Sigmoid colon (tissue), 7 donors: ENCODE measurements at regions of chr20 and their contacts with region 1.

Region 1: DNA sequence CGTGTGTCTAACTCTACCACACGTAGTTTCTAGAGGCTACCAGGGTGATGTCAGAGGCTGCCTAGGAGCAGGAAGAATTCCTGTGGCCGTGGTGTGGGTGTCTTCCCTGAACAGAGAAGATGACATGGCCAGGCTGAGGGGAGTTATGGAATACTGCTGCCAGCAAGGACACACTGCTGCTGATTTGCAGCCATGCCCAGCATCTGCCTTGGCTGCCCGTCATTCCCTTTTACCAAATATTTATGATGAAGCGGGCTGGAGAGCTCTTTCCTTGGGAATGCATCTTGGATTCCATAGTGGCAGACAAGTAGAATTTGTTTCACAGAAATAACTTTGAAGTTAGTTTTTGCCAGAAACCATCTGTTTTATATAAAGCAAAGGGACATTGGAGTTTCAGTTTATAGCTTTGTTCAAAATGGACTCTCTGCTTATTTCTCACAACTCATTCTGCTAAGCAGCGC is 80.8 kb upstream of the VSTM2L start:
- DNase-seq: peak; percentile 72
- H3K4me3 ChIP-seq: peak overlapping the region in 1 of 4 donors; percentile 7
- H3K27ac ChIP-seq: peak overlapping the region; percentile 60 to 74 (median 66)
- H3K4me1 ChIP-seq: peaks cover 0 to 25% (median 16%) of the 10 kb centered on the region in 4 donors
- H3K27me3 ChIP-seq: no peaks in the 10 kb centered on the region
- CTCF ChIP-seq: no peak
- EP300 ChIP-seq: peak in 1 of 4 donors; percentile 5
- POLR2A ChIP-seq: no peak

Region 2: GRCh38 chr20:37053230-37053950 is 768.8 kb before region 1 on chr20:
- intact Hi-C with region 1: no loop called
- DNase-seq: no peak
- H3K4me3 ChIP-seq: no peak overlapping the region
- H3K27ac ChIP-seq: no peak overlapping the region
- H3K4me1 ChIP-seq: no peaks in the 10 kb centered on the region
- H3K27me3 ChIP-seq: no peaks in the 10 kb centered on the region
- CTCF ChIP-seq: no peak
- EP300 ChIP-seq: no peak
- POLR2A ChIP-seq: no peak

Region 3: DNA sequence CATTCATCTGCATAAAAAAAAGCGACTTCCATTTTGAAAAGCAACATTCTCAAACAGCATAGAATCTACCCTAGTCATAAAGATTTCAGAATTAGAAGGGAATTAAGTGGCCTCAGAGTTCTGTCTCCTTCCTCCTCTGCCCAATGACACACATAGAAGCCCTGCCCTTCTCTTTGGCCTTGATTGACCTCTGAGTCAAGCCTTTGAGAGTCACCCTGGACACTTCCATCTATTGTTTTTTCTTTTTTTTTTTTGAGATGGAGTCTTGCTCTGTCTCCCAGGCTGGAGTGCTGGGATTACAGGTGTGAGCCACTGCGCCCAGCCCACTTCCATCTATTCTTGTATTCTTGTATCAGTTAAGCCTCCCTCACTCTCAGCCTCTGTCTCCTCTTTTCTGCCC is 173.2 kb before region 1 on chr20:
- intact Hi-C with region 1: no loop called
- DNase-seq: no peak
- H3K4me3 ChIP-seq: no peak overlapping the region
- H3K27ac ChIP-seq: no peak overlapping the region
- H3K4me1 ChIP-seq: no peaks in the 10 kb centered on the region
- H3K27me3 ChIP-seq: peaks cover 0 to 8% (median 0%) of the 10 kb centered on the region in 3 donors
- CTCF ChIP-seq: no peak
- EP300 ChIP-seq: no peak
- POLR2A ChIP-seq: no peak

Region 4: DNA sequence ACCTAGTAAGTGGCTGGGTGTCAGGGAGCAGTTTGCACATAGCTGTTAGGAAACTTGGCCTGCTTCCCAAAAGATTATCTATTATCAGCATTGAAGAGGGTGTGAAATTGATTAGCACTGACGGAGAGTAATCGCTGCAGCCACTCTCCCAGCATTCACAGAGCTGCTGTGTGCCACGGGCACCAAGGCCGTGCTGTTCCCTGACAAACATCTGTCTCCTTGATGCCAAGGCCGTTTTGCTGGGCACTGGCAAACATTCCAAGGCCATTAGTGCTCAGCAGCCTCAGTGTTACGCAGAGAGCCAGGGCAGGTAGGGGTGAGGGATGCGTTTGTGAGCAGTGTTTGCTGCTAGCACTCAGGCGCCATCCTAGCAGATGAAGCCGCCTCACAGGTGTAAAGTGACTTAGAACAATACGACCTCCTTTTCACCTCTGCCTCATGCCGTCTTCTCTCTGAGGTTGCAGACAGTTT is 23.1 kb after region 1 on chr20:
- intact Hi-C with region 1: no loop called
- DNase-seq: no peak
- H3K4me3 ChIP-seq: no peak overlapping the region
- H3K27ac ChIP-seq: no peak overlapping the region
- H3K4me1 ChIP-seq: no peaks in the 10 kb centered on the region
- H3K27me3 ChIP-seq: no peaks in the 10 kb centered on the region
- CTCF ChIP-seq: no peak
- EP300 ChIP-seq: no peak
- POLR2A ChIP-seq: no peak

Region 5: GRCh38 chr20:37867289-37868195 is 45.4 kb after region 1 on chr20:
- intact Hi-C with region 1: loop called (anchors 2 kb)
- DNase-seq: peak; percentile 81
- H3K4me3 ChIP-seq: no peak overlapping the region
- H3K27ac ChIP-seq: peak overlapping the region in 3 of 4 donors; percentile 75 to 86 (median 83)
- H3K4me1 ChIP-seq: peaks cover 0 to 53% (median 44%) of the 10 kb centered on the region in 4 donors
- H3K27me3 ChIP-seq: no peaks in the 10 kb centered on the region
- CTCF ChIP-seq: no peak
- EP300 ChIP-seq: peak in 3 of 4 donors; percentile 19 to 73 (median 57)
- POLR2A ChIP-seq: no peak